Body of pancreas (tissue), 4 donors: ENCODE measurements at regions of chr14 and their contacts with region 1.

Region 1: DNA sequence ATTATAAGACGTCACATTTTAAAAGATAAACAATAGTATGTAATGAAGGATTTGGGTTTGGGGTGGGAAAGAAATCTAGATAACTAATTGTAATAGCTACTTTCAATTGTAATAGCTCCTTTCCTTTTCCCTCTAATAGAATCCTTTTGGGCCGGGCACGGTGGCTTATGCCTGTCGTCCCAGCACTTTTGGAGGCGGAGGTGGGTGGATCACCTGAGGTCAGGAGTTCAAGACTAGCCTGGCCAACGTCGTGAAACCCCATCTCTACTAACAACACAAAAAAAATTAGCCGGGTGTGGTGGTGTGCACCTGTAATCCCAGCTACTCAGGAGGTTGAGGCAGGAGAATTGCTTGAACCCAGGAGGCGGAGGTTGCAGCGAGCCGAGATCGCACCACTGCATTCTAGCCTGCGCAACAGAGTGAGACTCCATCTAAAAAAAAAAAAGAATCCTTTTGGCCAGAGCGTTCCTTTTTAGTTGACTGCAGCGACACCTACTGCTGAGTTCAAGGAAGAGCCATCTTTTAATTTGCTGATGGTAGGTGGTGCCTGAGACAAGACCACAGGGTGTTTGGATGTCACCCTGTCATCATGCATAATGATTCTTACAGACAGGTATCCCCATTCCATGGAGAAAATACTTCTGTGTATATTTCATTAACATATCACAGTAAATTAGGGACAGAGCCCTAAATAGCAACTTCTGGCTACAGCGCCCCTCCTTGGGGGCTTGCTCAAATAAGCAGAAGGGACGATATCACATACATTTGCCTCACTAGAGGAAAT is 79.5 kb downstream of the ARMH4 start:
- DNase-seq: peak; percentile 56 to 62 (median 62)
- ATAC-seq: peak; percentile 83
- H3K4me3 ChIP-seq: no peak overlapping the region
- H3K27ac ChIP-seq: no peak overlapping the region
- H3K4me1 ChIP-seq: peaks cover 13% of the 10 kb centered on the region
- H3K27me3 ChIP-seq: no peaks in the 10 kb centered on the region
- CTCF ChIP-seq: peak; percentile 43 to 77 (median 70)
- POLR2A ChIP-seq: no peak

Region 2: GRCh38 chr14:57486767-57487379 is 585.6 kb before region 1 on chr14:
- intact Hi-C with region 1: loop called (anchors 10 kb)
- DNase-seq: peak in 3 of 4 donors; percentile 10 to 37 (median 17)
- ATAC-seq: peak; percentile 60
- H3K4me3 ChIP-seq: no peak overlapping the region
- H3K27ac ChIP-seq: no peak overlapping the region
- H3K4me1 ChIP-seq: no peaks in the 10 kb centered on the region
- H3K27me3 ChIP-seq: no peaks in the 10 kb centered on the region
- CTCF ChIP-seq: peak; percentile 38 to 75 (median 68)
- POLR2A ChIP-seq: no peak

Region 3: DNA sequence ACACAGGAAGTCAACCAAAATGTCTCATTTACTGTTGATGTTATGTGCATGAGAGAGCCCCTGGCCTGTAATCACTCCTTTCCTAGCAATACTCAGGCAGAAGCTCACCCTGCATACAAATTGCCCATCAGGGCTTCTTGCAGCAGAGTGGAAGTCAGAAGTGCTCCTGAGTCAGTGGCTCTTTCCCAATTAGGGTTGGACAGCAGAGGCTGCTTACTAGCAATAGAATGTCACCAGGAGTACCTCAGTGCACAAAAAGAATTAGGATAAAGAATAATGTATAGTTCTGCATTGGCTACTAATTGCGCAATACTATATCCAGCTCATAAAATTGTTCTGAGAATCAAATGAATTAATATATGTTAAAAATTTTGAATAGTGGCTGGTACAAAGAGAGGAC is 367.7 kb before region 1 on chr14:
- intact Hi-C with region 1: loop called (anchors 10 kb)
- DNase-seq: no peak
- ATAC-seq: no peak
- H3K4me3 ChIP-seq: no peak overlapping the region
- H3K27ac ChIP-seq: no peak overlapping the region
- H3K4me1 ChIP-seq: no peaks in the 10 kb centered on the region
- H3K27me3 ChIP-seq: no peaks in the 10 kb centered on the region
- CTCF ChIP-seq: no peak
- POLR2A ChIP-seq: no peak